Right cardiac atrium (tissue), 5 donors: ENCODE measurements at regions of chr1 and their contacts with region 1.

Region 1: DNA sequence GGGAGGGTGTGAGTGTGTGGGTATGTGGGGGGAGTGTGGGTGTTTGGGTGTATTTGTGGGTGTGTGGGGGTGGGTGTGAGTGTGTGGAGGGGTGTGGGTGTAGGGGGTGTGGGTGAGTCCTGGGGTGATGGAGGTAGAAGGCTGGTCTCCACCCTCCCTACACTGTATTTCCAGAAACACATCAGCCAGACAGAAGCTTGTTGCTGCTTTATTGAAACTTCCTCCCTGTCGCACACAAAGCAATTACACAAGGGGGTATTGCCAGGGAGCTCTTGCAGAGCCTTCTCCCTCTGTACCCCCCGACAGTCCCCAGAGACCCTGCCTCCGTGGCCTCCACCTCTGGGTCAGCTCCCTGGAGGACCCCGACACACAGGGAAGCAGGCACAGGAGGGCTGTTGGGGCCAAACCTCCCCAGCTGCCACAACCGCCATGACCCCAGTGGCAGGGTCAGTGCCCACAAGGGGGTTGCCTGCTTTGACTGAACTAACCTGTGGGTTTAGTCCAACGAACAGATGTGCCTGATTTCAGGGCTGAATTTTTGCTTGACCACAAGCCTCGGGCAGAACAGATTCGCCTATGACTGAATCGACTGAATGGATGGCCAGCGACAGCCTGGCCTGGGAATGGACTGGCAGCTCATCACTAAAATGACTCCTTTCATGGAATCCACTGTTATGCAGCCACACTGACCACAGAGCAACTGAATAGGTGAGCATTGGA is 9.1 kb upstream of the MATN1 start:
- DNase-seq: peak in 1 of 3 donors; percentile 13
- ATAC-seq: no peak
- H3K4me3 ChIP-seq: no peak overlapping the region
- H3K27ac ChIP-seq: no peak overlapping the region
- H3K4me1 ChIP-seq: no peaks in the 10 kb centered on the region
- H3K27me3 ChIP-seq: no peaks in the 10 kb centered on the region

Region 2: GRCh38 chr1:30764939-30765555 is 32.6 kb after region 1 on chr1:
- intact Hi-C with region 1: loop called in 1 of 4 experiments (anchors 5 kb)
- DNase-seq: no peak
- ATAC-seq: no peak
- H3K4me3 ChIP-seq: no peak overlapping the region
- H3K27ac ChIP-seq: no peak overlapping the region
- H3K4me1 ChIP-seq: no peaks in the 10 kb centered on the region
- H3K27me3 ChIP-seq: no peaks in the 10 kb centered on the region

Region 3: GRCh38 chr1:30929135-30929889 is 196.9 kb after region 1 on chr1:
- intact Hi-C with region 1: no loop called
- DNase-seq: no peak
- ATAC-seq: peak; percentile 65 to 77
- H3K4me3 ChIP-seq: no peak overlapping the region
- H3K27ac ChIP-seq: no peak overlapping the region
- H3K4me1 ChIP-seq: no peaks in the 10 kb centered on the region
- H3K27me3 ChIP-seq: no peaks in the 10 kb centered on the region